Activated CD4-positive, alpha-beta memory T cell treated with anti-CD3 and anti-CD28 coated beads, Interleukin-2, amount 10 ng/mL, durations not matched to agents 7 days and 5 days (primary cell): ENCODE measurements at regions of chr18 and their contacts with region 1.

Region 1: DNA sequence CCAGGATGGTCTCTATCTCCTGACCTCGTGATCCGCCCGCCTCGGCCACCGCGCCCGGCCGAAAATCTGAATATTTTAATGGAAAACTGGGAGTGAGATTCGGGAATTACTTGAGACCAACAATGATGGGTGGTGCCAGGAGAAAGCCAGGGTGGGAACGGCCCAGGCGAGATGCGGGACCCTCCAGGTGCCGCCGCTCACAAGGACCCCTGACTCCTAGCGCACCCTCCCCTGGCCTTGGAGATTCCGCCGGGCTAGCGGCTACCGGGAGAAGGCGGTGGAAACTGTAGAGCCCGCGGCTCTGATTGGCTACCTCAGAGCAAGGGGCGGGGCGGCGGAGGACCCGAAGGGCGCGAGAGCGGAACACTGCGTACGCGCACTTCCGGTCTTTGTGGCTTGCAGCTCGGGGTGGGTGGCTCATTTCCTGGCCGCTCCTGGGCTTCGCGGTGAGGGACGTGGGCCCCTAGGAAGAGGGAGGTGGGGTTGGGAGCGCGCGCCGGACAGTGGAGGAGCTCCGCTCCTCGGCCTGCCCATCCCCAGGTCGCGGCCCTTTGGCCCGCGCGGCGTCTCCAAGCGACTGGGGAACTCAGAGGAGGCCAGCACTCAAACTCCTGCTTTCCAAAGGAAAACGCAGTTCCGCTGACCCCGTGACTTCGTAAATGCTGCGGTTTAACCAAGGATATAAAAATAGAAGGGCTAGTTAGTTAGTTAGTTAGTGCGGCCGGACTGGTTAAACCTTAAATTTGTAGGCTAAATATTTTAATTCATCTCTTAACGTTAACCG is at the start of gene ZNF397:
- DNase-seq: peak; percentile 95
- H3K4me3 Mint-ChIP-seq: peak within 1 kb of the TSS; percentile 92
- H3K27ac Mint-ChIP-seq: peak within 1 kb of the TSS; percentile 95
- H3K4me1 Mint-ChIP-seq: peaks cover 10% of the 10 kb centered on the region
- H3K27me3 Mint-ChIP-seq: no peaks in the 10 kb centered on the region
- total RNA-seq, gene ZNF397: 14.4 to 16.1 TPM

Region 2: DNA sequence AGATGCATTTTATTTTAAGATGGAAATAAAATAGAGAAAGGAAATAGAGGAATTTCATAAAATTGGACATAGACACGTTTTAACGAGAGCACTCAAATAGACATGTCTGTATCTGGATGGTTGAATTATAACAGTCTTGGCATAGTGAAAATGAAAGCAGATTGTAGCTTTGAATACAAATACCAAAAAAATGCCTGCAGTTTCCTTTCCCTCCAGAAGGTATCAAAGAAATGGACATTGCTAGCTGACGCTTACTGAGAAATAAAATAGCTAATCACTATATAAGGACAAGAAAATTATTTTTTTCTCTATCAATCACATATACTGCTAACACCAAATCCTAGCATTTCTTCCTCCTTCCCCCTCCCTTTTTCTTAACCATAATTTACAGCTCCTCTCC is 211.1 kb before region 1 on chr18:
- CTCF ChIA-PET with region 1: no interaction called
- POLR2A ChIA-PET with region 1: interaction called, 10 read pairs
- DNase-seq: no peak
- H3K4me3 Mint-ChIP-seq: peak overlapping the region; percentile 67
- H3K27ac Mint-ChIP-seq: peak overlapping the region; percentile 89
- H3K4me1 Mint-ChIP-seq: peaks cover 27% of the 10 kb centered on the region
- H3K27me3 Mint-ChIP-seq: no peaks in the 10 kb centered on the region

Region 3: DNA sequence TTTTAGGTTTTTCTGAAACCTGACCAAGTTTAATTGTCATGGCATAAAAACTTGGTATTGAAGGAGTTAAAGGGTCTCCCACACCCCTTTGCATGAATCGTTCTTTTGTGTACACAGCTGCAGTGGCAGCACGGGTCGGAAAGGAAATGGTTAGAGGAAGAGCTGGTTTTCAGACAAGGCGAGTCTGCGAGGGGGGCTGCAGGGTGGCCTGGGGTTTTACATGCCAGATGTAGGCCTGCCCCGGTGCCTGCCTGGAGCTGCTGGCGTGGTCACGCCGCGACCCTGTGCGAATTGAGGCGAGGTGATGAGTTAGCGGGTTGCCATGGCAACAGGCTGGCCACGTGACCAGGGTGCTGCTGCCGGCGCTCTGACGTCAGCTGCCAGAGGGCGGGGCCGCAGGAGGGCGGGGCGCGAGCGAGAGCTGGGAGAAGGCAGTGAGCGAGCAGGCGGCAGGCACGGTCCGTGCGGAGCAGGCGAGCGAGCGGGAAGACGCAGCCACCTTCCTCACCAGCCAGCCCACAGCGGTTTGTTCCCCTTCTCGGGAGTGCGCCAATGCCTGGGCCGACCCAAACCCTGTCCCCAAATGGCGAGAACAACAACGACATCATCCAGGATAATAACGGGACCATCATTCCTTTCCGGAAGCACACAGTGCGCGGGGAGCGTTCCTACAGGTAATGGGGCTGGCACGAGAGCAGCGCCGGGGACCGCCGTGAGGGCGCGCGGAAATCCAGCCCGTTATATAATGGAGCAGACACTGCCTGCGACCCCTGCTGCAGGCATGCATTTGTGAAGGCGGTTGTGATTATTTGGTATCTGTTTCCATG is 199.7 kb before region 1 on chr18 and contains the start of gene MAPRE2:
- CTCF ChIA-PET with region 1: no interaction called
- POLR2A ChIA-PET with region 1: interaction called, 10 read pairs
- DNase-seq: peak; percentile 99
- H3K4me3 Mint-ChIP-seq: peak within 1 kb of the TSS; percentile 92
- H3K27ac Mint-ChIP-seq: peak within 1 kb of the TSS; percentile 88
- H3K4me1 Mint-ChIP-seq: peaks cover 45% of the 10 kb centered on the region
- H3K27me3 Mint-ChIP-seq: no peaks in the 10 kb centered on the region
- total RNA-seq, gene MAPRE2: 39.2 to 45.2 TPM

Region 4: DNA sequence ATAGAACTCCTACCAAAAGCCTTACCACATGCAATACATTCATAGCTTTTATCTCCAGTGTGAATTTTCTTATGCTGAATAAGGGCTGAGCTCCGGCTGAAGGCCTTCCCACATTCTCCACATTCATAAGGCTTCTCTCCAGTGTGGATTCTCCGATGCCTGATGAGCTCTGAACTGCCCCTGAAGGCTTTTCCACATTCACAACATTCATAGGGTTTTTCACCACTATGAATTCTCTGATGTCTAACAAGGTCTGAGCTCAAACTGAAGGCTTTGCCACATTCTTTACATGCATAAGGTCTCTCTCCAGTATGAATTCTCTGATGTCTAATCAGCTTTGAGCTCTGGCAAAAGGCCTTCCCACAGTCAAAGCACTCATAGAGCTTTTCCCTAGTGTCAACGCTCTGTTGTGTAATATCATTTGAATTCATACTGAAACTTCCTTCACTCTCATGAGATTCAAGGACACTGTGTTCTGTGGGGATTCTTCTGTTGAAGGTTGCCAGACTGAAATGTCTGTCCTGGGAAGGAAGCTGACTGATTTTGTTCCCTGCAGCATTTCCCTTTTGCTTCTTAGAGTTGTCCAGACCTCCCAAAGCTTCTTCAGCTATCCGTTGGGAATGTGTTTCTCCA is 12.9 kb after region 1 on chr18:
- CTCF ChIA-PET with region 1: no interaction called
- POLR2A ChIA-PET with region 1: no interaction called
- DNase-seq: no peak
- H3K4me3 Mint-ChIP-seq: no peak overlapping the region
- H3K27ac Mint-ChIP-seq: no peak overlapping the region
- H3K4me1 Mint-ChIP-seq: no peaks in the 10 kb centered on the region
- H3K27me3 Mint-ChIP-seq: no peaks in the 10 kb centered on the region

Region 5: DNA sequence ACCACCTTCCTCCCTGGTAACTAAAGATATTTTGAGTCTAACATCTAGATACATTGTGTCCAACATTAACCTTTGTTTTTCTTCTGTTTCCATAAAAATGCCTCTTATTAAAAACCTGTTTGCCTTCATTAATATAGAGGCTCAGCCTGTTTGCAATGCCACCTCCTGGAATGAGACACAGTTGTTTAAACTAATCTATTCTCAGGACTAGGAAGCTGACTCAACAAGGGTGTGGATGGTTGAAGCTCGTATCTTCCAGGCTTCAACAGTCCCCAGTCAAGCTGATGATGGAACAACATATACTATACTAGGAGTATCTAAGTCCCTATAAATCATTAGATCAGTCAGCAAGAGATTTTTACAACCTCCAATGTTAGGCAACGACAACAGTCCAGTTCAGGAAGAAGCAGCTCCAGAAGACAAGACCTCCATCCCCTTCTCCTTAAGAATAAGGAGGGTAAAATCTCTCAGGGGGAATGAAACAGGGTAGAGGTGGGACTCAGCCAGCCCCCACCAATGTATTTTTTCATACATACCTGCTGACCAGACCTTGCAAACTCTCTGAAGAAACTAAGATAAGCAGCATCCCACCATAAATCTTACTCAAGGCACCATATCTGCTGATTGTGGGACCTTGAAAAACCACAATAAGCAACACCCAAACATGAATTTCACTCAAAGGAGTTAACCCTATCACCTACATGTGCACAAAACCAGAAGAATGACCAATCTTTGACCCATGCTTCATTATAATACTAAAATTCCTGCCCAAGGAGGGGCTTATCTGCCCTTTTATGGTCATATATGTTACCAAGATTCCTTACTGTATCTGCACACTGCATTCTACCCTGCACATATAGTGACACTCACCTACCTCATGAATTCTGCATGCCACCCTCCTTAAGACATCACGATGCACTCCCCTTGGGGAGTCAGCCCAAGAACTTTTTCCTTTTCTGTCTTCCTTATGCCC is 81.9 kb after region 1 on chr18:
- CTCF ChIA-PET with region 1: no interaction called
- POLR2A ChIA-PET with region 1: no interaction called
- DNase-seq: no peak
- H3K4me3 Mint-ChIP-seq: no peak overlapping the region
- H3K27ac Mint-ChIP-seq: no peak overlapping the region
- H3K4me1 Mint-ChIP-seq: no peaks in the 10 kb centered on the region
- H3K27me3 Mint-ChIP-seq: no peaks in the 10 kb centered on the region

Region 6: DNA sequence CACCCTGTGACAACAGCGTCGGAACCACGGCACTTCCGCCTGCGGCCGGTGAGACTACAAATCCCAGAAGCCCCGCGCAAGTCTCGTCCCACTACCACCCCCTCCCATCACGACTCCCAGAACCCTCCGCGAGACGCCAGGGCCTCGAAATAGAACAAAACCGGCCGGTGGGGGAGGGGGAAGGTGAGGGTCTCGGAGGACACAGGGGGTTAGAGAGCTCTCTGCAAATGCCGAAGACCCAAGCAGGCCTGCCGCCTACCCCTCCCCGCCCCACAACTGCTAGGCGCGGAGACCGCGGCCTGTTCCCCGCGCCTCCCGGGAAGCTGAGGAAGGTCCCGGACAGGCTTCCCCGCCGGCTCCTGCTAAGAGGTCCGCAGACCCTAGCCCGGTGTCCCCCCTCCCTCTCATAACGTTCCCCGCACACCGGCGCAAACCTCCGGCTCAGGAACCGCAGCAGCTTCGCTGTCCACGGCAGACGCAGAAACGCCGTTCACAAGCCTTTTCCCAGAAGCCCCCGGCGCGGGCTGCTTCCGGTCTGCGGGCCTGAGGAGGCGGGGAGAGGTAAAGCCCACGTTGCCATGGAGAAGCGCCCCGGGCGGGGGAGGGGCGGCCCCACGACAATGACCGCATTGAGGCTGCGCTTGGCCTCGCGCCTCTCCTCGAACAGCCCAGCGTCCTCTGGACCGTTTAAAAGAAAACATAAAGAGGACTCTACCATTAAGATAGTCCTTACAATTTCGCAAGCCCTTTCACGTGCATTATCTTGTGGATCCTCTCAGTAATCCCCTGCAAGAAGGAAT is 103.3 kb after region 1 on chr18 and contains the start of gene ZNF24:
- CTCF ChIA-PET with region 1: interaction called, 5 read pairs
- POLR2A ChIA-PET with region 1: interaction called, 27 read pairs
- DNase-seq: peak; percentile 92
- H3K4me3 Mint-ChIP-seq: peak within 1 kb of the TSS; percentile 100
- H3K27ac Mint-ChIP-seq: peak within 1 kb of the TSS; percentile 92
- H3K4me1 Mint-ChIP-seq: peaks cover 33% of the 10 kb centered on the region
- H3K27me3 Mint-ChIP-seq: no peaks in the 10 kb centered on the region
- total RNA-seq, gene ZNF24: 53.9 to 55.2 TPM